ENCODE measurements at regions of chr4 and their contacts with region 1.

Region 1: DNA sequence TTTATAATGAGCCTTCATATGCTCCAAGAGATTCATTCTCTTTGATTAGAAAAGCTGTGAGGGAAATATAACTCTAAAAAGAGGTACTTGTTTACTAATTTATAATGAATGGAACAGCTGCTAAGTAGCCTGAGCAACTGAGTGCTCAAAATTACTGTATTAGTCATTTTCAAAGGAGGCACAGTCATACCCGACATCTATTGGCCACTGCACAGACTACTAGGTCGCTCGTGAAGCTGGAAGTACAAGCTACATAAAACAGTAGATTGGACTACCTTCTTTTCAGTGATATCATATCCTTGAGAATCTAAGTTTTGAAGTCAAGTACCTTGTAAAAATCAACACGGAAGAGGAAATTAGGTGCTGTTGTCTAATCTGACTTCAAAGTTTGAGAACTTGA is 52.0 kb upstream of the GLRB start:
- DNase-seq: no peak
- ATAC-seq: peak; percentile 21; the same call in 1 of the 3 replicates
- H3K4me3 ChIP-seq: no peak overlapping the region
- H3K27ac ChIP-seq: no peak overlapping the region
- H3K4me1 ChIP-seq: no peaks in the 10 kb centered on the region
- H3K27me3 ChIP-seq: no peaks in the 10 kb centered on the region
- CTCF ChIP-seq: no peak
- EP300 ChIP-seq: no peak
- POLR2A ChIP-seq: no peak
- RAD21 ChIP-seq: no peak

Region 2: DNA sequence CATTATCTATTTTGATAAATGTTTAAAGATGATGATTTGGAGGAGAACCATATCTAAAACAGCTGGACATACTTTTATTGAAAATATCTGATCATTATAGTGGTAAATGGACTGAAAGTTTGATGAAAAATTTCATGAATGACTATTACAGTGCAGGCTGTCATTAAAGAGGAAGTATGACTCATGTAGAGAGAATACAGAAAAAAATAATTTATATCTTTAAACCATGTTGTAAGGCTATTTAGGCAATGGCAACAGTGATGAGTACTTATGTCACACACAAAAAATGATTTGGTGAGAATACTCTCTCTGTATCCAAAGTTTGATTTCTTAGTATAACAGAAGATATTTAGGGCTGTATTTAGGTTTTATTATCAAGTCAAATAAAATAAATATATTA is 48.1 kb after region 1 on chr4:
- CTCF ChIA-PET with region 1: no interaction called
- POLR2A ChIA-PET with region 1: no interaction called
- RAD21 ChIA-PET with region 1: no interaction called
- SMC1A ChIA-PET with region 1: no interaction called
- in situ Hi-C with region 1: no loop called
- intact Hi-C with region 1: no loop called
- DNase-seq: no peak
- ATAC-seq: peak; percentile 56
- H3K4me3 ChIP-seq: no peak overlapping the region
- H3K27ac ChIP-seq: no peak overlapping the region
- H3K4me1 ChIP-seq: no peaks in the 10 kb centered on the region
- H3K27me3 ChIP-seq: peaks cover 0 to 2% of the 10 kb centered on the region in 2 experiments; a peak in 2 of 4 replicates
- CTCF ChIP-seq: no peak
- EP300 ChIP-seq: no peak
- POLR2A ChIP-seq: no peak
- RAD21 ChIP-seq: no peak

Region 3: DNA sequence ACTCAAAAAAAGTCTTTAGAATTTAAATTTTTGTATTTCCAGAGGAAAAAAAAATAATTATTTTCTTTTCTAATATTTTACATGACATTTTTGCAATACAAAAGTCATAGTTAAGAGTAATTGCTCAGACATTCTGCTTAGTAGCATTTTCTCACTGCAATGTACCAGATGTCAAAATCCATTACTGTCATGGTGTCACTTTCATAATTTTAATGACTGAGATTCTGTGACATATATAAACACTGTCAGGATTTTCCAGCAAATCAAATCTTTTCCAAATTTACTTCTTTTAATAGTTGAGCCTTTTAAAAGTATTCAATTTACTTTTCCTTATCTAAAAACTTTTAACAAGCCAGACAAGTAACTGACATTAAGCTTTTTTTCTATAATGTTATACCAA is 619.3 kb after region 1 on chr4:
- CTCF ChIA-PET with region 1: no interaction called
- POLR2A ChIA-PET with region 1: interaction called, 10 read pairs
- RAD21 ChIA-PET with region 1: no interaction called
- SMC1A ChIA-PET with region 1: no interaction called
- in situ Hi-C with region 1: no loop called
- intact Hi-C with region 1: no loop called
- DNase-seq: no peak
- ATAC-seq: no peak
- H3K4me3 ChIP-seq: no peak overlapping the region
- H3K27ac ChIP-seq: no peak overlapping the region
- H3K4me1 ChIP-seq: no peaks in the 10 kb centered on the region
- H3K27me3 ChIP-seq: no peaks in the 10 kb centered on the region
- CTCF ChIP-seq: no peak
- EP300 ChIP-seq: no peak
- POLR2A ChIP-seq: no peak
- RAD21 ChIP-seq: no peak

Measured in GM12878 (cell line).